PC-9 (cell line): ENCODE measurements at regions of chr4 and their contacts with region 1.

Region 1: GRCh38 chr4:128241425-128241913 is 46.1 kb downstream of the PGRMC2 start:
- DNase-seq: peak; percentile 87 to 88
- H3K4me3 ChIP-seq: peak overlapping the region; percentile 24; the same call in 1 of the 2 replicates
- H3K27ac ChIP-seq: peak overlapping the region; percentile 87
- H3K4me1 ChIP-seq: peaks cover 20% of the 10 kb centered on the region
- H3K27me3 ChIP-seq: no peaks in the 10 kb centered on the region
- CTCF ChIP-seq: no peak

Region 2: GRCh38 chr4:126338548-126338947 is 1902.9 kb before region 1 on chr4:
- CTCF ChIA-PET with region 1: no interaction called
- POLR2A ChIA-PET with region 1: no interaction called
- intact Hi-C with region 1: no loop called
- DNase-seq: no peak
- H3K4me3 ChIP-seq: no peak overlapping the region
- H3K27ac ChIP-seq: no peak overlapping the region
- H3K4me1 ChIP-seq: no peaks in the 10 kb centered on the region
- H3K27me3 ChIP-seq: no peaks in the 10 kb centered on the region
- CTCF ChIP-seq: no peak

Region 3: GRCh38 chr4:127421437-127421836 is 820.0 kb before region 1 on chr4:
- CTCF ChIA-PET with region 1: no interaction called
- POLR2A ChIA-PET with region 1: no interaction called
- intact Hi-C with region 1: no loop called
- DNase-seq: no peak
- H3K4me3 ChIP-seq: no peak overlapping the region
- H3K27ac ChIP-seq: no peak overlapping the region
- H3K4me1 ChIP-seq: no peaks in the 10 kb centered on the region
- H3K27me3 ChIP-seq: no peaks in the 10 kb centered on the region
- CTCF ChIP-seq: no peak

Region 4: DNA sequence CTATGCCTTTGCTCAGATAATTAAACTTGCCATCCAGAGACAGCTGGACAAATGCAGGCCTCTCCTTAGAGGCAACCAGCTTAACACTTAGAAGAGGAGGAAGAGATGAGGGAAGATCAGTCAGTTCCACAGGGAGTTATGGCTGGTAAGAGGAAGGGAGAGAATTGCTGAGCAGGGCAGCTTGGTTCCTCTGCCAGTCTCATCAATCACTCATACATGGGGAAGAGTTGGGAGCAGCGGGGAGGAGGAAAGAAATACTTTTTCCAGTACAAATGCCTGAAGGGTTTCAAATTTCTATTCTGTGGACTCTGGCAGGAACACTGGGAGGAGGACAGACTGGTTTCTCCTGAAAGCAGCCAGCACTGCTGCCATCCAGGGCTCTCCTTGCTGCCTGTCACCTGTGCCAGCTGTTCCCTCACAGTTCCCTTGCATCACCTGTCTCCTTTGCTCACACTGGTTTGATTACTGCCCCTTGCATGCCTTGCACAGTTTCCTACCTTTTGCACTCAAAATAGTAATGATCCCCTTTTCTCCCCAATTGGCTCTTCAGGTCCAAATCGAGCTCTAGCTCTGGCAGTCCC is 13.4 kb before region 1 on chr4:
- CTCF ChIA-PET with region 1: no interaction called
- POLR2A ChIA-PET with region 1: no interaction called
- intact Hi-C with region 1: loop called (anchors 1 kb)
- DNase-seq: peak; percentile 73 to 76
- H3K4me3 ChIP-seq: no peak overlapping the region
- H3K27ac ChIP-seq: peak overlapping the region; percentile 51
- H3K4me1 ChIP-seq: peaks cover 17% of the 10 kb centered on the region
- H3K27me3 ChIP-seq: no peaks in the 10 kb centered on the region
- CTCF ChIP-seq: no peak

Region 5: DNA sequence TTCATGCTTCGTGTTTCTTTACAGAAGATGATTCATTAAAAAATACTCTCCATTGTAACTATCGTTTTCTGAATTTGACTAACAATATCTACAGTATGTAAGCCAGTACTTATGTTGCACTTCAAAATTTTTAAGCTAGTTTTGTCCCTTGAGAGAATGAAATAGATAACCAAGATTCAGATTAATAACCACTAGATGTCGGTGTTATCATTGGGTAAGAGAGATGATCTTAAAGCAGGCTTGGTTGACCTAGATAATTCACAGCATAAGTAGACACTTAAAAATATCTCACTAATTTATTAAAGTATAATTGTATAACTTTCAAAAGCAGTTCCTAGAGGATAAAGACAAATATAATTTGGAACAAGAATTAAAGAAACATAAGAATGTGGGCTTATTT is 1285.3 kb after region 1 on chr4:
- CTCF ChIA-PET with region 1: no interaction called
- POLR2A ChIA-PET with region 1: no interaction called
- intact Hi-C with region 1: no loop called
- DNase-seq: no peak
- H3K4me3 ChIP-seq: no peak overlapping the region
- H3K27ac ChIP-seq: no peak overlapping the region
- H3K4me1 ChIP-seq: no peaks in the 10 kb centered on the region
- H3K27me3 ChIP-seq: no peaks in the 10 kb centered on the region
- CTCF ChIP-seq: peak; percentile 48; the same call in 1 of the 2 replicates